OCI-LY7 (cell line): ENCODE measurements at regions of chr10 and their contacts with region 1.

Region 1: GRCh38 chr10:70101668-70102067 is 31.0 kb downstream of the AIFM2 start:
- DNase-seq: no peak
- H3K4me3 ChIP-seq: no peak overlapping the region
- H3K27ac ChIP-seq: no peak overlapping the region
- H3K4me1 ChIP-seq: no peaks in the 10 kb centered on the region
- CTCF ChIP-seq: no peak

Region 2: DNA sequence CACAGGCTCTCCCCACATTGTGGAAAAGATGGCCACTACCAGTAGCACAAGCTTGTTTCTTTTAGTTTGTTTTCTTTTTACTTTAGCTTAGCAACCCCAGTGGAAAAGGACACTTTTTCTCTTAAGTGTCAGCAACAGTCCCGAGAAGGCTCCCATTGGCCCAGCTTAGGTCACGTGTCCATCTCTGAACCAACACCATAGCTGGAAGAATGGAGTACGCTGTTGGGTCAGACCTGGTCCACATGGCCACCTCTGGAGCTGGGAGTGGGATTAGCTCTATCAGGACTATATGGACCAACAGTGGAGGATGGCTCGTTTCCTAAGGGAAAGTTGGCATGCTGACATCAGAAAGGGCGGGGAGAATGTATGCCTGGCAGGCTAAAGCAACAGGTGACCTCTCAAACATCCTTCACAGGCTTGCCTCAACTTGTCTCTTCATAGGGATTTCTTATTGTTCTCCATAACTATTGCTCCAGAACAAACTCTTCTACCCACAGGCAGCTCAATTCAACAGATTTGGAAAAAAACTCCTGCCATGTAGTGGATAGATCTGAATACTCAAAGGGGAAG is 500.8 kb before region 1 on chr10:
- CTCF ChIA-PET with region 1: no interaction called
- POLR2A ChIA-PET with region 1: no interaction called
- intact Hi-C with region 1: loop called (anchors 5 kb)
- DNase-seq: no peak
- H3K4me3 ChIP-seq: no peak overlapping the region
- H3K27ac ChIP-seq: no peak overlapping the region
- H3K4me1 ChIP-seq: no peaks in the 10 kb centered on the region
- CTCF ChIP-seq: no peak

Region 3: GRCh38 chr10:69960988-69961880 is 140.4 kb before region 1 on chr10:
- CTCF ChIA-PET with region 1: no interaction called
- POLR2A ChIA-PET with region 1: no interaction called
- intact Hi-C with region 1: no loop called
- DNase-seq: peak; percentile 45
- H3K4me3 ChIP-seq: no peak overlapping the region
- H3K27ac ChIP-seq: no peak overlapping the region
- H3K4me1 ChIP-seq: peaks cover 47% of the 10 kb centered on the region
- CTCF ChIP-seq: peak; percentile 77